GM12878 (cell line): ENCODE measurements at regions of chr3 and their contacts with region 1.

Region 1: GRCh38 chr3:69510481-69511030 is 124.7 kb upstream of the FRMD4B start:
- DNase-seq: no peak
- ATAC-seq: no peak
- H3K4me3 ChIP-seq: no peak overlapping the region
- H3K27ac ChIP-seq: no peak overlapping the region
- H3K4me1 ChIP-seq: no peaks in the 10 kb centered on the region
- H3K27me3 ChIP-seq: no peaks in the 10 kb centered on the region; a peak in 1 of 4 replicates
- CTCF ChIP-seq: no peak
- EP300 ChIP-seq: no peak
- POLR2A ChIP-seq: no peak
- RAD21 ChIP-seq: no peak

Region 2: DNA sequence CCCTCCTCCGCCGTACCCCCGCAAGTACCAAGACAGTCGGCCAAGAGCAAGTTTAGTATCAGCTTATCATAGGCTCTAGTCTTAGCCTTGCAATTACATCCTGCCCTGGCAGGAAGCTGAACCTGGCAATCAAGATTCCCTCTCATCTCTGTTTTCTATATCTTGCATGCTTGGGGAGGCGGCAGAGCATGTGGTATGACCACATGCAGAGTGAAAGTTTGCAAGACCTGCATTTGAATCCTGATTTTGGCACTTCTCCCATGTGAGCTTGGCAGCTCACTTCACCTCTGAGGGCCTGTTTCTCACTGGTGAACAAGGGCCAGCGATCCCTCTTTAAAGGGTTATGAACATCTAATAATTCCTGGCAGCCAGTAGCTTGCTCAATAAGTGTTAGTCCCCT is 18.6 kb before region 1 on chr3:
- CTCF ChIA-PET with region 1: interaction called, 4 read pairs
- POLR2A ChIA-PET with region 1: no interaction called
- RAD21 ChIA-PET with region 1: no interaction called
- SMC1A ChIA-PET with region 1: no interaction called
- in situ Hi-C with region 1: no loop called
- intact Hi-C with region 1: loop called (anchors 1 kb)
- DNase-seq: no peak
- ATAC-seq: no peak
- H3K4me3 ChIP-seq: no peak overlapping the region
- H3K27ac ChIP-seq: no peak overlapping the region
- H3K4me1 ChIP-seq: no peaks in the 10 kb centered on the region
- H3K27me3 ChIP-seq: no peaks in the 10 kb centered on the region; a peak in 1 of 4 replicates
- CTCF ChIP-seq: no peak
- EP300 ChIP-seq: no peak
- POLR2A ChIP-seq: no peak
- RAD21 ChIP-seq: no peak

Region 3: GRCh38 chr3:69542221-69543079 is 31.9 kb after region 1 on chr3:
- CTCF ChIA-PET with region 1: no interaction called
- POLR2A ChIA-PET with region 1: no interaction called
- RAD21 ChIA-PET with region 1: no interaction called
- SMC1A ChIA-PET with region 1: no interaction called
- in situ Hi-C with region 1: no loop called
- intact Hi-C with region 1: no loop called
- DNase-seq: no peak
- ATAC-seq: no peak
- H3K4me3 ChIP-seq: no peak overlapping the region
- H3K27ac ChIP-seq: no peak overlapping the region
- H3K4me1 ChIP-seq: no peaks in the 10 kb centered on the region
- H3K27me3 ChIP-seq: peaks cover 0 to 5% of the 10 kb centered on the region in 2 experiments; a peak in 3 of 4 replicates
- CTCF ChIP-seq: no peak
- EP300 ChIP-seq: no peak
- POLR2A ChIP-seq: no peak
- RAD21 ChIP-seq: no peak

Region 4: DNA sequence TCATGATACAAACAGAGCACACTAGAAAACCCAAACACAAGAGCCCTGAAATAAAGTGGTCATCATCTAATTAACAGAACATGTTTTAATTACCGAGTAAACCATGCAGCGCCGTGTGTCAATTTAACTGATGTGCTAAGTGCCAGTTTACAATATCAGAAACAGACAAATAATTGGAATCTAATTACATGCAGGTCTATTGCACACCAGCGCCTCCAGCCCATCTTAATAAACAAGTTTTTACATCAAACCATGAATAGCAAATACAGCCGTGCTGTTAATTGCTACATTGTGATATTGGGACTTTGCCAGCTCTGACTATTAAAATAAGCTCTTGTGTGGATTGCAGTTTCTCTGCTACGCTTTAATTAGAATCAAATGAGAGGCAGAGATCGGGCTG is 1312.1 kb after region 1 on chr3:
- CTCF ChIA-PET with region 1: no interaction called
- POLR2A ChIA-PET with region 1: no interaction called
- RAD21 ChIA-PET with region 1: no interaction called
- SMC1A ChIA-PET with region 1: no interaction called
- in situ Hi-C with region 1: no loop called
- intact Hi-C with region 1: no loop called
- DNase-seq: no peak
- ATAC-seq: no peak
- H3K4me3 ChIP-seq: no peak overlapping the region
- H3K27ac ChIP-seq: no peak overlapping the region
- H3K4me1 ChIP-seq: no peaks in the 10 kb centered on the region
- H3K27me3 ChIP-seq: no peaks in the 10 kb centered on the region
- CTCF ChIP-seq: no peak
- EP300 ChIP-seq: no peak
- POLR2A ChIP-seq: no peak
- RAD21 ChIP-seq: no peak